PC-3 (cell line): ENCODE measurements at regions of chr10 and their contacts with region 1.

Region 1: DNA sequence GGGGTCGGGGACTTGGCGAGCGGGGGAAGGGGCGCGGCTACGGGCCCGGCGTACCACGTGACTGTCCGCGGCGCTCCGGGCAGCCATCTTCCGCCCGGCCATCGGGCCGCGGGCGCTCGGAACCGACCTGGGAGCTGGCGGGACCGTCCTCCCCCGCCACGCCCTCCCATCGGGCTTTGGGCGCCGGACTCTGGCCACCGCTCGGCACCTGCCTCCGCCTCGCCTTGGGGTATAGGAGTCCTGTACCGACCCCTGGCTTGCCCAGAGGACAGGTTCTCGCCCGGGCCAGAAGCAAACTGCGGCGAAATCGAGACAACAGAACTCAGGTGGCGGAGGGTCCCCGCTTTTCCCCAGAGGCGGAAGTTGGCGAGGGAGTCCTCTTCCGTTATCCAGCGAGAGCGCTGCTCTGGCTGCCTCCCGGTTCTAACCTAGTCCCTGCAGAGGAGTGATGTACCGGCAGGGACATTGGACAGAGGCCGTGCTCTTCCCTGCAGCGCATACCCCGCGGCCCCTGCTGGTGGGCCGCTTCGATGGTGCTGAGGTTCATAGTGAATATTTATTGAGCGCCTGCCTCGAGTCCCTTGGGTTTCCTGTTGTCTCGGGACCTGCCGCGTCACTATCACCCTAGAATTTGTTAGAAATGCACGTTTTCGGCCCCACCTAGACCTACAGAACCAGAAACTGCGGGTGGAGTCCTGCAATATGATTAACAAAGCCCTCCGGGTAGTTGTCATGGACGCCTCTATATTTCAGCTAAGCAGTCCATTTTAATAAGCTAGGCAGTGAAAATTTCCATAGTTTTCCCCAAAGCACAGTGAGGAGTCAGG is 1.3 kb upstream of the SGMS1 start:
- DNase-seq: peak; percentile 93
- ATAC-seq: peak; percentile 52
- H3K4me3 ChIP-seq: peak overlapping the region; percentile 74
- H3K27ac ChIP-seq: peak overlapping the region; percentile 89
- H3K4me1 ChIP-seq: peaks cover 23% of the 10 kb centered on the region
- H3K27me3 ChIP-seq: no peaks in the 10 kb centered on the region
- CTCF ChIP-seq: peak; percentile 80

Region 2: GRCh38 chr10:50224330-50224952 is 400.6 kb before region 1 on chr10:
- CTCF ChIA-PET with region 1: no interaction called
- POLR2A ChIA-PET with region 1: no interaction called
- intact Hi-C with region 1: loop called (anchors 10 kb)
- DNase-seq: peak; percentile 99
- ATAC-seq: peak; percentile 99
- H3K4me3 ChIP-seq: no peak overlapping the region
- H3K27ac ChIP-seq: no peak overlapping the region
- H3K4me1 ChIP-seq: peaks cover 6% of the 10 kb centered on the region
- H3K27me3 ChIP-seq: peaks cover 8% of the 10 kb centered on the region; the same call in 1 of the 2 replicates
- CTCF ChIP-seq: peak; percentile 97

Region 3: GRCh38 chr10:50362547-50363125 is 262.4 kb before region 1 on chr10:
- CTCF ChIA-PET with region 1: interaction called, 5 read pairs
- POLR2A ChIA-PET with region 1: interaction called, 6 read pairs
- intact Hi-C with region 1: loop called (anchors 1 kb)
- DNase-seq: peak; percentile 100
- ATAC-seq: peak; percentile 84
- H3K4me3 ChIP-seq: peak overlapping the region; percentile 12; the same call in 1 of the 2 replicates
- H3K27ac ChIP-seq: peak overlapping the region; percentile 88
- H3K4me1 ChIP-seq: peaks cover 45% of the 10 kb centered on the region
- H3K27me3 ChIP-seq: no peaks in the 10 kb centered on the region
- CTCF ChIP-seq: no peak

Region 4: DNA sequence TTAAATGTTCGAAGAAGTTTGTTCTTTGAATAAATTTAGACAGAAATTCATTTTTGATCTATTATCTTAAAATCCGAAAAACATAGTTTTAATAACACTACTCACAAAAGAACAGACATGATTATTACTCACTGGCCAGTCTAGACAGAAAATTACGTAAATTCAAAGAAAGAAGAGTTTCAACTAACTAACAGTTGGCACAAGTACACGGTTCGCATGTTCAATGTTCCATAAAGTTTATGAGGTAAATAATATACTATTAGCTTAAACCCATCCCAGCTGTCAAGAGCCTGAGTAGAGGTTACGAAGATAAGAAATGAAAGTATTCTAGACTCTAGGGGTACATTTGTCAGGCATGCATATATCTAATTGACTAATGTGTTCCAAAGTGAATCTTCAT is 222.0 kb before region 1 on chr10:
- CTCF ChIA-PET with region 1: no interaction called
- POLR2A ChIA-PET with region 1: interaction called, 9 read pairs
- intact Hi-C with region 1: loop called (anchors 1 kb)
- DNase-seq: peak; percentile 63
- ATAC-seq: peak; percentile 54
- H3K4me3 ChIP-seq: no peak overlapping the region
- H3K27ac ChIP-seq: peak overlapping the region; percentile 71
- H3K4me1 ChIP-seq: peaks cover 65% of the 10 kb centered on the region
- H3K27me3 ChIP-seq: no peaks in the 10 kb centered on the region
- CTCF ChIP-seq: no peak

Region 5: GRCh38 chr10:50501918-50502452 is 123.1 kb before region 1 on chr10:
- CTCF ChIA-PET with region 1: no interaction called
- POLR2A ChIA-PET with region 1: no interaction called
- intact Hi-C with region 1: loop called (anchors 5 kb)
- DNase-seq: peak; percentile 51
- ATAC-seq: peak; percentile 55
- H3K4me3 ChIP-seq: no peak overlapping the region
- H3K27ac ChIP-seq: peak overlapping the region; percentile 49
- H3K4me1 ChIP-seq: peaks cover 39% of the 10 kb centered on the region
- H3K27me3 ChIP-seq: no peaks in the 10 kb centered on the region
- CTCF ChIP-seq: no peak

Region 6: DNA sequence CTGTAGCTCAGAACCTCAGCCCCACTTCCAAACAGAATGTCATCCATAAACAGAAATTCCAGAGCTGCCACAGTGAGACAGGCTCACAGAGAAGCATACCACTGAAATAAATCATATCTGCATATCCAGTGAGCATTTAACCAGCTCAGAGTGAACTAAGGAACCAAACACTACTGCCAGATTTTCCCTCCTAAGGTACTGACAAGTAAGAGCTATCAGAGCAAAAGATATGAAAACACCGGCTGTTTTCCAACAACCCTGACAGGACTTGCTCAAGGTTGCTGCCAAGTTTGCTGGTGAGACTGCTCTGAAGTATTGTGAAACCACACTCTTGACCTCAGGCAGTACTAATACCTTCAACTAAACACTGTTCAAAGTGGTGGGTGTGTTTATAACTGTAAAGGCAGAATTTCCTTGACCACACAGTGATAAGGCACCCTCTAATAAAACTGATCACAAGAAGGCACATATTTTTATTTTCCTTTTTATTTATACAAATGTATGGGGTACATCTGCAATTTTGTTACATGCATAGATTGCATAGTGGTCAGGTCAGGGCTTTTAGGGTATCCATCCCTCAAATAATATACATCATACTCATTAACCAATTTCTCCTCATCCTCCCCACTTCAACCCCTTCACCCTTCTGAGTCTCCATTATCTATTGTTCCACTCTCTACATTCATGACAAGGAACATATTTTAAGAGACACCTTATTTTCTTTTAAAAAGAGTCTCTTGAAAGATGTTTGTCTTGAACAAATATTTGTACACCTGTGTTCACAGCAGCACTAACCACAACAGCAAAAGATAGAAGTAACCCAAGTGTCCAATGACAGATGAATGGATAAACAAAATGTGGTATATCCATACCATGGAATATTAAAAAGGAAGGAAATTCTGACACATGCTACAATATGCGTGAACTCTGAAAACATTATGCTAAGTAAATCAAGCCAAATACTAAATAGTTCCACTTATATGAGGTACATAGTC is 19.5 kb before region 1 on chr10:
- CTCF ChIA-PET with region 1: interaction called, 3 read pairs
- POLR2A ChIA-PET with region 1: interaction called, 6 read pairs
- intact Hi-C with region 1: loop called (anchors 1 kb)
- DNase-seq: peak; percentile 99
- ATAC-seq: peak; percentile 73
- H3K4me3 ChIP-seq: peak overlapping the region; percentile 13; the same call in 1 of the 2 replicates
- H3K27ac ChIP-seq: peak overlapping the region; percentile 66
- H3K4me1 ChIP-seq: peaks cover 77% of the 10 kb centered on the region
- H3K27me3 ChIP-seq: no peaks in the 10 kb centered on the region
- CTCF ChIP-seq: no peak